Heart right ventricle (tissue), 16 donors: ENCODE measurements at regions of chr1 and their contacts with region 1.

Region 1: GRCh38 chr1:10472220-10473144 is at the start of gene DFFA:
- DNase-seq: peak; percentile 88 to 96
- ATAC-seq: peak; percentile 83 to 94 (median 91)
- H3K4me3 ChIP-seq: peak within 1 kb of the TSS; percentile 45 to 94 (median 74)
- H3K27ac ChIP-seq: peak within 1 kb of the TSS in 8 of 10 donors; percentile 59 to 85 (median 71)
- H3K4me1 ChIP-seq: peaks cover 4 to 46% (median 31%) of the 10 kb centered on the region in 9 donors
- H3K27me3 ChIP-seq: no peaks in the 10 kb centered on the region
- CTCF ChIP-seq: no peak
- total RNA-seq, gene DFFA: 19.8 to 26.7 (median 23.2) TPM

Region 2: DNA sequence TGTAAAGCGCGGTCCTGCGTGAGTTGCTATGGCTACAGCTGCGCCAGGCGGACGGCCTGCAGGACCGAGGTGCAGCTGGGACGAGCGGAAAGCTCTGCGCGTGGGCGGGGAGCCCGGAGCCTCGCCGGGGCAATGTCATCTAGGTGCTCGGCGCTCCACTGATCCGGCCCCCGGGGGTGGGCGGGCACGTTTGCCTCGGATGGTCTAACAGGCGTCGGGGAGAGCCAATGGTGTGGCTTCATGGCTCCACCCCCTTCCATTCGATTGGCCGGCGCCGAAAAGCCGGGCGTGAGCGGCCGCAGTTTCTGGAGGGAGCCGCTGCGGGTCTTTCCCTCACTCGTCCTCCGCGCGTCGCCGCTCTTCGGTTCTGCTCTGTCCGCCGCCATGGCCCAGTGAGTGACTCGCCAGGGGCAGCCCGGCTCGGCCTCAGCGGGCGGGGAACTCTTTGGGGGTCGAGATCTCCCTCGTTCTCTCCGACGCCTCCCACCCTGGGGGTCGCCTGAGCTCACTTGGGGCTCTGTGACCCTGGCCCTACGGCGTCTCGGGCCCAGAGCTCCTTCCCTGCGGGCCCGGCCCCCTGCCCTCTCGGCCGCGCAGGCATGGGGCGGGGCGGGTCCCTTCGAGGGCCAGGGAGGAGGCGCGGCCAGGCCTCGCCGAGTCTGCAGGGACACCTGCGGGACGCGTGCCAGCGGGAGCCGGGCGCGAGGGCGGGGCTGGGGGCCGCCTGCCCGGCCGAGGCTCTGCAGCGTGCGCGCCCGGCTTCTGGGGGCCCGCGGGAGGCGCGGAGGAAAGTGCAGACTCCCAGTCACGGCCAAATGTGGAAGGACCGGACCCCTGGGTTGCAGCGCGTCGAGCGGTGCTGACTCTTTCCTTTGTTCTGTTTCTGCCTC is 73.5 kb before region 1 on chr1 and contains the start of gene PGD:
- intact Hi-C with region 1: loop called in 1 of 10 experiments (anchors 2 kb)
- DNase-seq: peak; percentile 98 to 99
- ATAC-seq: peak; percentile 98 to 100 (median 100)
- H3K4me3 ChIP-seq: peak within 1 kb of the TSS; percentile 57 to 99 (median 80)
- H3K27ac ChIP-seq: peak within 1 kb of the TSS; percentile 59 to 97 (median 90)
- H3K4me1 ChIP-seq: peaks cover 3 to 47% (median 14%) of the 10 kb centered on the region in 9 donors
- H3K27me3 ChIP-seq: no peaks in the 10 kb centered on the region
- CTCF ChIP-seq: peak in 1 of 9 donors; percentile 10
- total RNA-seq, gene PGD: 28.3 to 60.9 (median 32.9) TPM

Region 3: GRCh38 chr1:10430216-10431069 is 42.0 kb before region 1 on chr1 and contains the start of gene CENPS:
- intact Hi-C with region 1: loop called in 1 of 10 experiments (anchors 5 kb)
- DNase-seq: peak; percentile 90 to 92
- ATAC-seq: peak; percentile 96 to 98 (median 98)
- H3K4me3 ChIP-seq: peak within 1 kb of the TSS; percentile 52 to 93 (median 75)
- H3K27ac ChIP-seq: peak within 1 kb of the TSS in 9 of 10 donors; percentile 43 to 81 (median 67)
- H3K4me1 ChIP-seq: peaks cover 0 to 19% (median 13%) of the 10 kb centered on the region in 9 donors
- H3K27me3 ChIP-seq: no peaks in the 10 kb centered on the region
- CTCF ChIP-seq: peak; percentile 92 to 98 (median 96)
- total RNA-seq, gene CENPS: 4.9 to 10.7 (median 9.4) TPM

Region 4: DNA sequence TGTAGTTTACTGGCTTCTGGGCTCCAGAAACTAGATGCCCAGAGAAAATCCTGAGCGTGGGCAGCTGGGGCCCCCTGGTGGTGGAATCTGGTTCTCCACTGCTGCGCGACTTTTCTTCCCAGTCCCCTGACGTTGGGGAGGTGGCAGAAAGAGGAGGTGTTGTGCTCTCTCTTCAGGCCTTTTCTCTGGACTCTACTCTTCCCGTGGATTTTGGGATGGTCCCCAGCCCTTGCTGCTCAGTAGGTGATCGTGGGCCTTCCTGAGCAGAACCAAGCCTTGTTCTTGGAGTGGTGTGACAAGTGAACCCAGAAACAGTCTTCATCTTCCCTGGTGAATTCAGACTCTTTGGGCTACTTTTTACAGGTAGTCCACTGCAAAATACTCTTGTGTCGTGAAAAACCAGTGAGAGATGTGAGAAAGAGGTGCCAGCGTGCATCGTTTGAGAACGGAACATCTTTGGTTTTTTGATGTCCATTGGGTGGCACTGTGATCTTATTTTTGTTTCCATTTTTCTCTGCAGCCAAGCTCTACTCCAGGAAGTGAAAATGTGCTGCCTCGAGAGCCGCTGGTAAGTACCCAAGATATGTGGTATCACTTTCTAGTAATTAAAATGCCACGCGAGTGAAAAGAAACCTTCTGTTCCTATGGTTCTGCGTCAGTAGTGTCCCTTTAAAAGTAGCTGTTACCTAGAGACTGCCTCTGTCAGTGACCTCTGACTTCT is 22.4 kb after region 1 on chr1:
- intact Hi-C with region 1: no loop called
- DNase-seq: peak; percentile 65 to 68
- ATAC-seq: peak; percentile 69 to 92 (median 86)
- H3K4me3 ChIP-seq: peak overlapping the region in 6 of 10 donors; percentile 23 to 47 (median 35)
- H3K27ac ChIP-seq: peak overlapping the region in 6 of 10 donors; percentile 11 to 82 (median 51)
- H3K4me1 ChIP-seq: peaks cover 0 to 36% (median 23%) of the 10 kb centered on the region in 9 donors
- H3K27me3 ChIP-seq: no peaks in the 10 kb centered on the region
- CTCF ChIP-seq: peak; percentile 80 to 92 (median 88)

Region 5: GRCh38 chr1:10530281-10530740 is 57.8 kb after region 1 on chr1:
- intact Hi-C with region 1: loop called in 1 of 10 experiments (anchors 5 kb)
- DNase-seq: peak in 1 of 2 donors; percentile 40
- ATAC-seq: peak; percentile 43 to 68 (median 54)
- H3K4me3 ChIP-seq: peak overlapping the region in 1 of 10 donors; percentile 4
- H3K27ac ChIP-seq: peak overlapping the region in 2 of 10 donors; percentile 3 to 77
- H3K4me1 ChIP-seq: peaks cover 18 to 54% (median 33%) of the 10 kb centered on the region in 9 donors
- H3K27me3 ChIP-seq: no peaks in the 10 kb centered on the region
- CTCF ChIP-seq: peak; percentile 52 to 81 (median 67)